ENCODE measurements at regions of chr12 and their contacts with region 1.

Region 1: DNA sequence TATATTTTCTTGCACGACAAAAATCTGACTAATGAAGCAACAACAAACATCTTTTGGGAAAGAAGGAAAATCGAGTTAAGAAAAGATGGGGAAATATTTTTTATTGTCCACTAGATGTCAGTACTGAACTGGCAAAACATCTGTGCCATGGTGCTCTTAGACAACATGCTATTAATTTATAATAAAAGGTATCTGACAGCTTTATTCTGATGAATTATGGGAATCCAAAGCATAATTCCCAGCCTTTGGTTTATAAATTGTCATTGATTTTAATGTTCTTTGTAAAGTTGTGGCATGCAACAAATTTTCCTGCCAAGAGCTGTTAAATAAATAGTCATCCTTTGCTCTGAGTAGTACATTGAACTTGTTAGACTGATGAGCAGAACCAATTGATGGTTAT is 231.2 kb downstream of the ETNK1 start:
- DNase-seq: no peak
- H3K4me3 ChIP-seq: no peak overlapping the region
- H3K27ac ChIP-seq: no peak overlapping the region
- H3K4me1 ChIP-seq: peaks cover 0 to 10% (median 2%) of the 10 kb centered on the region in 4 experiments; a peak in 2 of 7 replicates
- H3K27me3 ChIP-seq: no peaks in the 10 kb centered on the region
- CTCF ChIP-seq: peak in 2 of 3 experiments; percentile 15 to 35; a peak in 2 of 4 replicates
- EP300 ChIP-seq: no peak
- POLR2A ChIP-seq: no peak
- RAD21 ChIP-seq: peak; percentile 72 to 86

Region 2: DNA sequence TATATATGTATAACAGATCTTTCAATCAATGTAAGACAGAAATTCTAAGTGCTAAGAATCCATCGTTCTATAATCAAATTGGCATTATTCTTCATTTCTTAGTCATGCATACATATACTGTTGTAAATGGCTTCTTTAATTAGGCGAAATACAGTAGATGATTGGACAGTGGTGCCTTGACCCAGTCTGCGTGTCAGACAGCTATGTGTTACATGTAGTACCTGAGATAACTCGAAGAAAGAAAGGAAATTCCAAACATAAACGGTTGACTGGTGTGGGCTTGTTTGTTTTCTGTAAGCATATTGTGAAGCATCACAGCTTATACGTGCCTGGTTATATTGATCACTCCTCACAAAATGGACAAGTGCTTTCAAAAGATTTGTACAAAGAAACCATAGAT is 20.7 kb before region 1 on chr12:
- CTCF ChIA-PET with region 1: interaction called, 11 read pairs
- POLR2A ChIA-PET with region 1: no interaction called
- DNase-seq: no peak
- H3K4me3 ChIP-seq: no peak overlapping the region
- H3K27ac ChIP-seq: no peak overlapping the region
- H3K4me1 ChIP-seq: no peaks in the 10 kb centered on the region
- H3K27me3 ChIP-seq: no peaks in the 10 kb centered on the region
- CTCF ChIP-seq: no peak
- EP300 ChIP-seq: no peak
- POLR2A ChIP-seq: no peak
- RAD21 ChIP-seq: no peak

Region 3: DNA sequence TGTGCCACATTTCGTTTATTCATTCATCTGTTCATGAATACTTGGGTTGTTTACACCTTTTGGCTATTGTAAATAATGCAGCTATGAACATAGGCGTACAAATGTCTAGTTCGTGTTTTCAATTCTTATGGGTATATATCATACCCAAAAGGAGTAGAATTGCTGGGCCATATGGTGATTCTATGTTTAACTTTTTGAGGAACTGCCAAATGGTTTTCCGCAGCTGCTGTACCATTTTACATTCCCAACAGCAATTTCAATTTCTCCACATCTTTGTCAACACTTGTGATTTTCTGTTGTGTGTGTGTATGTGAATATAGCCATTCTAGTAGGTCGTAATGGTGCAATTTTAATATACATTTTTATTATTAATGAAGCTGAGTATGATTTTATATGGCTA is 95.0 kb after region 1 on chr12:
- CTCF ChIA-PET with region 1: interaction called, 10 read pairs
- POLR2A ChIA-PET with region 1: no interaction called
- DNase-seq: no peak
- H3K4me3 ChIP-seq: no peak overlapping the region
- H3K27ac ChIP-seq: no peak overlapping the region
- H3K4me1 ChIP-seq: no peaks in the 10 kb centered on the region
- H3K27me3 ChIP-seq: no peaks in the 10 kb centered on the region
- CTCF ChIP-seq: no peak
- EP300 ChIP-seq: no peak
- POLR2A ChIP-seq: no peak
- RAD21 ChIP-seq: no peak

Region 4: DNA sequence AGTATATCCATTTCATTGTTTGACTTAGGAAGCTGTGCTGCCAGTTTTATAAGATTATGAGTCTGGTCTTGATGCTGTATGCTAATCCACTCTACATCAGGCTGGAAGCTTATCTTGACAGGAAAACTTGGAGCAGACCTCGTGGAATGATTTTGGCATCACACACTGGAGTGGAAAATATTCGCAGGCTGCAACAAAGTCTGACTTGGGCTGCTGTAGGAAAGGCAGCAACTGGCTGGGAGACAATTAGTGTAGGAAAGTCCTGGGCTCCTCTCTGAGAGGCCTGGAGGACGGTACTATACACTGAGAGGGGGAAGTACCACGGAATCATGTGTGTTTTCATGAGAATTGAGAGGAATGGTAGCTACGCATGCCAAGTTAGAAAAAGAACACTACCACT is 152.4 kb after region 1 on chr12:
- CTCF ChIA-PET with region 1: no interaction called
- POLR2A ChIA-PET with region 1: no interaction called
- DNase-seq: no peak
- H3K4me3 ChIP-seq: no peak overlapping the region
- H3K27ac ChIP-seq: no peak overlapping the region
- H3K4me1 ChIP-seq: no peaks in the 10 kb centered on the region
- H3K27me3 ChIP-seq: no peaks in the 10 kb centered on the region
- CTCF ChIP-seq: no peak
- EP300 ChIP-seq: no peak
- POLR2A ChIP-seq: no peak
- RAD21 ChIP-seq: no peak

Region 5: GRCh38 chr12:23049180-23049579 is 193.0 kb after region 1 on chr12:
- CTCF ChIA-PET with region 1: interaction called, 108 read pairs
- POLR2A ChIA-PET with region 1: no interaction called
- DNase-seq: no peak
- H3K4me3 ChIP-seq: no peak overlapping the region
- H3K27ac ChIP-seq: no peak overlapping the region
- H3K4me1 ChIP-seq: no peaks in the 10 kb centered on the region
- H3K27me3 ChIP-seq: peaks cover 0 to 1% (median 0%) of the 10 kb centered on the region in 4 experiments; a peak in 1 of 7 replicates
- CTCF ChIP-seq: no peak
- EP300 ChIP-seq: no peak
- POLR2A ChIP-seq: no peak
- RAD21 ChIP-seq: no peak

Region 6: GRCh38 chr12:23060161-23060560 is 204.0 kb after region 1 on chr12:
- CTCF ChIA-PET with region 1: interaction called, 108 read pairs
- POLR2A ChIA-PET with region 1: no interaction called
- DNase-seq: no peak
- H3K4me3 ChIP-seq: no peak overlapping the region
- H3K27ac ChIP-seq: no peak overlapping the region
- H3K4me1 ChIP-seq: no peaks in the 10 kb centered on the region
- H3K27me3 ChIP-seq: no peaks in the 10 kb centered on the region
- CTCF ChIP-seq: no peak
- EP300 ChIP-seq: no peak
- POLR2A ChIP-seq: no peak
- RAD21 ChIP-seq: no peak

Region 7: GRCh38 chr12:23221066-23221465 is 364.9 kb after region 1 on chr12:
- CTCF ChIA-PET with region 1: interaction called, 12 read pairs
- POLR2A ChIA-PET with region 1: no interaction called
- DNase-seq: no peak
- H3K4me3 ChIP-seq: no peak overlapping the region
- H3K27ac ChIP-seq: no peak overlapping the region
- H3K4me1 ChIP-seq: no peaks in the 10 kb centered on the region
- H3K27me3 ChIP-seq: no peaks in the 10 kb centered on the region
- CTCF ChIP-seq: peak; percentile 57 to 78 (median 63)
- EP300 ChIP-seq: no peak
- POLR2A ChIP-seq: no peak
- RAD21 ChIP-seq: peak; percentile 81 to 86